Psoas muscle (tissue), 8 donors: ENCODE measurements at regions of chr11 and their contacts with region 1.

Region 1: DNA sequence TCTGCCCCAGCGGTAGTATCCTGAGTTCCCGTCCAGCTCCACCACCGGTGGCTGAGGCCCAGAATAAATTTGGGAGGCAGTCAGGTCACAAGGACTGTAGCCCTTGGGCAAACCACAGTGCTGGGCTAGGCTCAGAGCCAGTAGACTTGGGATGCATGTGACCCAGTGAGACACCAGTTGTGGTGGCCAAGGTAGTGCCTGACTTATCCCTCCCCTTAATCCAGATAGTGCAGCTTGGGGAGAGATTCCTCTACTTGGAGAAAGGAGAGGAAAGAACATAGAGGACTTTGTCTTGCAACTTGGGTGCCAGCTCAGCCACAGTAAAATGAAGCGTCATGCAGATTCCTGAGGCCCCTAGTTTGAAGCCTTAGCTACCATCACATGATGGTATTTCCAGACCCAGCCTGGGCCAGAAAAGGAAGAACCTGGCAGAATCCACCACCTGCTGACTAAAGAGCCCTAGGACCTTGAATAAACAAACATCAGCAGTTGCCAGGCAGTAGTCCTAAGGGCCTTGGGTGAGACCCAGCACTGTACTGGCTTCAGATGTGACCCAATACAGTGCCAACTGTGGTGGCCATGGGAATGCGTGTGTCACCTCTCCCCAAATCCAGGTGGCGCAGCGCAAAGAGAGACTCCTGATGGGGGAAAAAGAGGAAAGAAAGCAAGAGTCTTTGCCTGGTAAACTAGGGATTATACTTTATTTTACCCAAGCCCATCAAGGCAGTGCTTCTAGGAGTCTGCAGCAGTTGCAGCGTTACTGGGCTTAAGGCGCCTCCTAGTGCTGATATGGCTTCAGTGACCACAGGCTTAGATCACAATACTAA is 17.0 kb upstream of the DDX10 start:
- DNase-seq: peak; percentile 49 to 66
- ATAC-seq: peak; percentile 87 to 93 (median 90)
- H3K4me3 ChIP-seq: no peak overlapping the region
- H3K27ac ChIP-seq: peak overlapping the region; percentile 34
- H3K4me1 ChIP-seq: peaks cover 3% of the 10 kb centered on the region
- H3K27me3 ChIP-seq: no peaks in the 10 kb centered on the region
- CTCF ChIP-seq: peak; percentile 71

Region 2: GRCh38 chr11:108008656-108009496 is 639.0 kb before region 1 on chr11 and contains the start of gene CUL5:
- intact Hi-C with region 1: loop called in 1 of 2 experiments (anchors 5 kb)
- DNase-seq: peak; percentile 94 to 96
- ATAC-seq: peak; percentile 96 to 98 (median 96)
- H3K4me3 ChIP-seq: peak within 1 kb of the TSS; percentile 81
- H3K27ac ChIP-seq: peak within 1 kb of the TSS; percentile 91
- H3K4me1 ChIP-seq: peaks cover 35% of the 10 kb centered on the region
- H3K27me3 ChIP-seq: no peaks in the 10 kb centered on the region
- CTCF ChIP-seq: peak; percentile 83
- total RNA-seq, gene CUL5: 57.8 to 92.2 (median 65.5) TPM

Region 3: GRCh38 chr11:108340970-108341369 is 306.9 kb before region 1 on chr11:
- intact Hi-C with region 1: loop called (anchors 10 kb)
- DNase-seq: no peak
- ATAC-seq: no peak
- H3K4me3 ChIP-seq: no peak overlapping the region
- H3K27ac ChIP-seq: no peak overlapping the region
- H3K4me1 ChIP-seq: no peaks in the 10 kb centered on the region
- H3K27me3 ChIP-seq: no peaks in the 10 kb centered on the region
- CTCF ChIP-seq: no peak

Region 4: DNA sequence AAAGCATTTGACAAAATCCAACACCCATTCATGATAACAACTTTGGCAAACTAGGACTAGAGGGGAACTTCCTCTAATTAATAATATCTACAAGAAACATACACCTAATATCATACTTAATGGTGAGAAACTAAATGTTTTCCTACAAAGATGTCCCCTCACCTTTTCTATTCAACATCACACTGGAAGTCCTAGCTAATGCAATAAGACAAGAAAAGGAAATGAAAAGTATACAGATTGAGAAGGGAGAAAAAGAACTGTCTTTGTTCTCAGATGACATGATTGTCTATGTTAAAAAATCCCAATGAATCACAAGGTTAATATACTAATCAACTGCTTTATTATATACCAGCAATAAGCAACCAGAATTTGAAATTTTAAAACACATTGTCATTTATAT is 233.0 kb before region 1 on chr11:
- intact Hi-C with region 1: loop called in 1 of 2 experiments (anchors 10 kb)
- DNase-seq: no peak
- ATAC-seq: no peak
- H3K4me3 ChIP-seq: no peak overlapping the region
- H3K27ac ChIP-seq: no peak overlapping the region
- H3K4me1 ChIP-seq: no peaks in the 10 kb centered on the region
- H3K27me3 ChIP-seq: no peaks in the 10 kb centered on the region
- CTCF ChIP-seq: no peak

Region 5: DNA sequence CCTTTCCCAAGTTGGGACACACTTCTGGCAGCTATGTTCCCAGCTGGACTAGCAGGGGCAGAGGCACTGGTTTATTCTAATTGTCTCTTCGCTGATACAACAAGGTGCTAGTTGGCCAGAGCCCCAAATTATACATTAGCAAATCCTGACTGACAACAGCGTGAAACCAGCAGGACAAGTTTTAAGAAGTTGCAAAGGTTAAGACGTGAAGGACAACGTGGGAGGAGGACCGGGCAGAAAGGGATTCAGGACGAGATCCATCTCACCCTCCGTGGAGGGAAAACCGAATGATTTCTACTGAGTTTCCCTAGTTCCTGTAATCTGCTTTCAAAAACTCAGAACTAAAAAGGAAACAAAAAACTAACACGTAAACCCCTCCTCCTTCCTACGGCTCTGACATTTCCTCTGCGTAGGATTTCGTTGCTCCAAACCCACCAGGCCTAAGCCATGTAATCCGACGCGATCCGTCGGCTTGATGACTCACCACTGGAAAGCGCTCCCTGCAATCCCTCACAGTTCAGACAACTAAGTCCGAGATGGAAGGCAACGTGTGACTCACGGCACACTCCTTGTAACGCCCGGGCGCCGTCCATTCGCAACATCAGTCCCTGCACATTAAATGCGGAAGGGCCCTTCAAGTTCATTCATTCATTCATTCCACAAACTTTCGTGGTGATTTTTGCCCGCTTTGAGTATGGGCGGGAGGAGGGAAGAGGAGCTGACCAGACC is 150.4 kb before region 1 on chr11:
- intact Hi-C with region 1: loop called (anchors 10 kb)
- DNase-seq: peak; percentile 89 to 94
- ATAC-seq: peak; percentile 98 to 99 (median 98)
- H3K4me3 ChIP-seq: peak overlapping the region; percentile 75
- H3K27ac ChIP-seq: peak overlapping the region; percentile 93
- H3K4me1 ChIP-seq: peaks cover 11% of the 10 kb centered on the region
- H3K27me3 ChIP-seq: no peaks in the 10 kb centered on the region
- CTCF ChIP-seq: no peak

Region 6: DNA sequence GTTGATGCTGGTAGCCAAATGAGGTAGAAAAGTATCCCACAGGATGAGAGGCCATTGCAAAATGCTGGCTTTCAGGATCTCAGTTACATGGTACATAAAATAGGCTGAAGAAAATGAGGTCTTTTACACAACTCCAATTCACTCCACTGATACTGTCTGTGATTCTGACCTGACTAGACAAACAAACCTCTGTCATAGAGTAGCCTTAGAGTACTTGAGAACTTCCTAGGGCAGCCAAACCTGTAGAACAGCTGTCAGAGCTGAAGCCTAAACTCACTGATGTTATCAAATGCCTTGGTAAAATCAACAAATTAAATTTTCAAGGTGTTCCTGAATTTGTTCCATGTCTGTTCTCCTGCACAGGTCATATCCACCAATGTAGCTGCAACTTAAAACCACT is 123.5 kb before region 1 on chr11:
- intact Hi-C with region 1: no loop called
- DNase-seq: no peak
- ATAC-seq: no peak
- H3K4me3 ChIP-seq: no peak overlapping the region
- H3K27ac ChIP-seq: no peak overlapping the region
- H3K4me1 ChIP-seq: no peaks in the 10 kb centered on the region
- H3K27me3 ChIP-seq: peaks cover 0 to under 1% (median 0%) of the 10 kb centered on the region in 3 donors
- CTCF ChIP-seq: no peak

Region 7: DNA sequence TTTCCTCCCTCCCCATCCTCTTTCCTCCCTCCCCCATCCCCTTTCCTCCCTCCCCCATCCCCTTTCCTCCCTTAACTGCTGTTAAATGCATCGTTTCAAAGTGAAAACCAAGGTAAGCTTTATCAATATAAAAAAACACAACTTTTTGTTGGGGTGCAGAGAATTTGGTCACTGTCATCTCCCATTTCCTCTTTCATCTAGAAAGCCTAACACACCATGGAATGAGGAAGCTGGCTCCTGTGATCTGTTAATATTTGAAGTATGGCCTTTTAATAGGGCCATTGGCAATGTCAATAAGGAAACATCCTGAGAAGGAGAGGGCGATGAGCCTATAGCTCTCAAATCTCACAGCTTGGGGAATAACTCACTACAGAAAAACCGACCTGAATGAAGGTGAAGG is 61.3 kb before region 1 on chr11:
- intact Hi-C with region 1: no loop called
- DNase-seq: no peak
- ATAC-seq: no peak
- H3K4me3 ChIP-seq: no peak overlapping the region
- H3K27ac ChIP-seq: no peak overlapping the region
- H3K4me1 ChIP-seq: no peaks in the 10 kb centered on the region
- H3K27me3 ChIP-seq: no peaks in the 10 kb centered on the region
- CTCF ChIP-seq: no peak

Region 8: DNA sequence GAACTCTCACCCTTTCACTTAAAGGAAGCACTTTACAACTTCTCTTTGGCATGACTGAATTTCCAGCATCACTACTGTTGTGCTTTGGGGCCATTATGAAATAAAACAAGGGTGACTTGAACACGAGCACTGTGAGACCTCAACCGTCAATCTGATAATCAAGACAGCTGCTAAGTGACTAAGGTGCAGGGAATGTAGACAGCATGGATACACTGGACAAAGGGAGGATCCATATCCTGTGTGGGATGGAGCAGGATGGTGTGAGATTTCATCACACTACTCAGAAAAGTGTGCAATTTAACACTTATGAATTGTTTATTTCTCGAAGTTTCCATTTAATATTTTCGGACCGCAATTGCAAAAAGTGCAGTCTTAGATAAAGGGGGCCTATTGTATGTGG is 38.2 kb before region 1 on chr11:
- intact Hi-C with region 1: no loop called
- DNase-seq: no peak
- ATAC-seq: no peak
- H3K4me3 ChIP-seq: no peak overlapping the region
- H3K27ac ChIP-seq: no peak overlapping the region
- H3K4me1 ChIP-seq: no peaks in the 10 kb centered on the region
- H3K27me3 ChIP-seq: no peaks in the 10 kb centered on the region
- CTCF ChIP-seq: no peak